HepG2 (cell line): ENCODE measurements at regions of chr2 and their contacts with region 1.

Region 1: DNA sequence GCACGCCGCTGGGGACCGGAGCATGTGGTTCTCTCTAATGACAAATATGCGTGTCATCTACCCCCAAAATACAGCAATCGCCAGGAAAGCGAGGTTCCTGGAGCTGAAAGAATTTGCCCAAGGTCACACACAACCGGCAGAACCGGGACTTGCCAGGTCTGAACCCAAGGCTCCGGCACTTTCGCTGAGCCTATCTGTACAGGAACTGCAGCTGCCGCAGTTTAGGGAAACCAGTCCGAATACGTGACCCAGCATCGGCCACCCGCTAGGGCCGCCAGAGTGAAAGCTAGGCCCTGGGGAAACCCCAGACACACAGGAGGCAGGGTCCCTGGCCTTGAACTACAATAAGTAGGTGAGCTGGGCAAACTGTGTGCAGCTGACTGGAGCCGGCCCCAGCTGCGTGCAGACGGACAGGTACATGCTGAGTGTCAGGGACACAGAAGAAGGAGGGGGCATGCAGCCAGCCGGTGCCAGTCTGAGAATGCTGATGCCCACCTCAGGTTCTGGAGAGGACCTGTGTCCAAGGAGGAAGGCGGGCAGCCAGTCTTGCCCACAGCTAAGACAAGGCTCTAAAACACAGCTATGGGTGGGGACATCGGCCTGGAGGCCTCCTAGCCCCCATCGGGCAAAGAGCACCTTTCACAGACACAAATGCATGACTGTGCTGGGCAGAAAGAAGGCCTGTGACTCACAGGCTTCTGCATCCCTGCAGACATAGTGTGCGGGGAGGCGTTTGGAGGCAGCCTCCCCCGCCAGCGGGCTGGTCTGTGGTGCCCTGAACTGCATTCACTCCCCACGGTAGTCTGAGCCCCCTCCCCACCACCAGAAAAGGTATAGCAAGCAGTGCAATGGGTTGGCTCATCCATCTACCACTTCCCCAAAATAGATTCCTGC is 107.5 kb upstream of the ID2 start:
- DNase-seq: peak; percentile 90
- ATAC-seq: peak; percentile 81
- H3K4me3 ChIP-seq: peak overlapping the region; percentile 51 to 71 (median 55)
- H3K27ac ChIP-seq: peak overlapping the region; percentile 82
- H3K4me1 ChIP-seq: peaks cover 75% of the 10 kb centered on the region
- H3K27me3 ChIP-seq: no peaks in the 10 kb centered on the region; a peak in 2 of 5 replicates
- CTCF ChIP-seq: peak; percentile 25
- EP300 ChIP-seq: peak; percentile 69 to 85; a peak in 3 of 4 replicates
- POLR2A ChIP-seq: peak in 1 of 2 experiments; percentile 54; a peak in 3 of 4 replicates
- RAD21 ChIP-seq: peak; percentile 40

Region 2: DNA sequence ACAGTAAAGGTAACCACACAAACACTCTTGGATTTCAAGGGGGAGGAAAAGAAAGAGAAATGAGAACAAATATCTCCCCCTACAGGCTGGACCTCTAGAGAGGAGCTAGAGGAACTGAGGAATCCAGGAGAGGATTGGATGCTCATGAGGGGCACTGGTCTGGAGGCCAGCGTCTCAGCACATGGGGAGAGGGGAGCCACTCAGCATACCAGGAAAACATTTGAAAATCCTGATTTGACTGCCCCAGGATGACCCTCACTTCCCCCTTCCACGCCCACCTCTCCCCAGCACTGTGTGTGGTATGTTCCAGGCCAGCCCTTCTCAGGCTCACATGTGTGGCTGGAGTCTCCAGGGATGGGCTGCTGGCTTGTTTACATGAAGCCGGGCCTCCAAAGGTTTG is 289.3 kb before region 1 on chr2:
- CTCF ChIA-PET with region 1: no interaction called
- POLR2A ChIA-PET with region 1: no interaction called
- in situ Hi-C with region 1: no loop called
- intact Hi-C with region 1: no loop called
- DNase-seq: peak; percentile 20
- ATAC-seq: peak; percentile 64
- H3K4me3 ChIP-seq: no peak overlapping the region
- H3K27ac ChIP-seq: no peak overlapping the region
- H3K4me1 ChIP-seq: peaks cover 9% of the 10 kb centered on the region
- H3K27me3 ChIP-seq: peaks cover 0 to 2% of the 10 kb centered on the region in 2 experiments; a peak in 1 of 5 replicates
- CTCF ChIP-seq: peak; percentile 44
- EP300 ChIP-seq: no peak
- POLR2A ChIP-seq: no peak
- RAD21 ChIP-seq: no peak

Region 3: GRCh38 chr2:8312861-8313830 is 261.2 kb before region 1 on chr2:
- CTCF ChIA-PET with region 1: no interaction called
- POLR2A ChIA-PET with region 1: no interaction called
- in situ Hi-C with region 1: no loop called
- intact Hi-C with region 1: no loop called
- DNase-seq: no peak
- ATAC-seq: no peak
- H3K4me3 ChIP-seq: no peak overlapping the region
- H3K27ac ChIP-seq: no peak overlapping the region
- H3K4me1 ChIP-seq: peaks cover 12% of the 10 kb centered on the region
- H3K27me3 ChIP-seq: peaks cover 2 to 18% of the 10 kb centered on the region in 2 experiments; a peak in 3 of 5 replicates
- CTCF ChIP-seq: no peak
- EP300 ChIP-seq: no peak
- POLR2A ChIP-seq: no peak
- RAD21 ChIP-seq: no peak

Region 4: DNA sequence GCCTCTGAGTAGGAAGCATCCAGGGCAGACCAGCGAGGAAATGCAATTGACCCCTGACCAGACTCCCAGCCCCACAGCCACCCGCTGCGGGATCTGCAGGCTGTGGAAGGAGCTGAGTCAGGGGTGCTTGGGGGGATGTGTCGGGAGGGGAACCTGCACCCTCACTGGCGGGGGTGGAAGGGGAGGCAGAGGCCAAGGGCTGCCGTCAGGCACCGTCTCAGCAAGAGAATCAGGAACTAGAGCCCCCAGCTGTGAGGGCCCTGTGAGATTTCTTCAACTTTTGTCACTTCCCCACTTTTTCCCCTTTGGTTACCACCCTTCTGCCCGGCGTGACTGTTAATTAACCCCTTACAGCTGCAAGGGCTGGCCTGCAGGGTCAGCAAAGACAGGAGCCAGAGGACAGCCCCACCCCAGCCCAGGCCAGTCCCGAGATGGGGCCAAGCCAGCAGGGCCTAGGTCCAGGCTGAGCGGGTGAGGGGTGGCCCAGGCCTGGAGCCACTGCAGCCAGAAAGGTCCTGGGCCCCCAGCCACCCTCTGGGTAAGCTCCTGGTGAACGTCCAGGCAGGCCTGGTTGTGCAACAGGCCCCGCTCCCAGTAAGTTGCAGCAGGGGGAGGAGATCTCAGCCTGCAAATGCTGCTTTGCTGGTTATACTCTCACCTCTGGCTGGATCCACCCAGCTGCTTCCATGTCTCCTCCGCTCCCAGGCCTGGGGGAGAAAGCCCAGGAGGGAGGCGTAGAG is 39.5 kb before region 1 on chr2:
- CTCF ChIA-PET with region 1: no interaction called
- POLR2A ChIA-PET with region 1: interaction called, 4 read pairs
- in situ Hi-C with region 1: no loop called
- intact Hi-C with region 1: loop called (anchors 2 kb)
- DNase-seq: peak; percentile 48
- ATAC-seq: peak; percentile 85
- H3K4me3 ChIP-seq: peak overlapping the region in 2 of 3 experiments; percentile 4 to 56; a peak in 2 of 6 replicates
- H3K27ac ChIP-seq: no peak overlapping the region
- H3K4me1 ChIP-seq: peaks cover 42% of the 10 kb centered on the region
- H3K27me3 ChIP-seq: peaks cover 6 to 34% of the 10 kb centered on the region in 2 experiments
- CTCF ChIP-seq: 0 out of 2 replicates have a peak, but pooled peaks have one; percentile 26
- EP300 ChIP-seq: no peak
- POLR2A ChIP-seq: no peak
- RAD21 ChIP-seq: peak; percentile 25; the same call in 1 of the 2 replicates

Region 5: GRCh38 chr2:8606226-8606625 is 31.8 kb after region 1 on chr2:
- CTCF ChIA-PET with region 1: no interaction called
- POLR2A ChIA-PET with region 1: interaction called, 47 read pairs
- in situ Hi-C with region 1: no loop called
- intact Hi-C with region 1: loop called (anchors 5 kb)
- DNase-seq: no peak
- ATAC-seq: no peak
- H3K4me3 ChIP-seq: no peak overlapping the region
- H3K27ac ChIP-seq: no peak overlapping the region
- H3K4me1 ChIP-seq: peaks cover 66% of the 10 kb centered on the region
- H3K27me3 ChIP-seq: no peaks in the 10 kb centered on the region
- CTCF ChIP-seq: no peak
- EP300 ChIP-seq: no peak
- POLR2A ChIP-seq: no peak
- RAD21 ChIP-seq: no peak

Region 6: DNA sequence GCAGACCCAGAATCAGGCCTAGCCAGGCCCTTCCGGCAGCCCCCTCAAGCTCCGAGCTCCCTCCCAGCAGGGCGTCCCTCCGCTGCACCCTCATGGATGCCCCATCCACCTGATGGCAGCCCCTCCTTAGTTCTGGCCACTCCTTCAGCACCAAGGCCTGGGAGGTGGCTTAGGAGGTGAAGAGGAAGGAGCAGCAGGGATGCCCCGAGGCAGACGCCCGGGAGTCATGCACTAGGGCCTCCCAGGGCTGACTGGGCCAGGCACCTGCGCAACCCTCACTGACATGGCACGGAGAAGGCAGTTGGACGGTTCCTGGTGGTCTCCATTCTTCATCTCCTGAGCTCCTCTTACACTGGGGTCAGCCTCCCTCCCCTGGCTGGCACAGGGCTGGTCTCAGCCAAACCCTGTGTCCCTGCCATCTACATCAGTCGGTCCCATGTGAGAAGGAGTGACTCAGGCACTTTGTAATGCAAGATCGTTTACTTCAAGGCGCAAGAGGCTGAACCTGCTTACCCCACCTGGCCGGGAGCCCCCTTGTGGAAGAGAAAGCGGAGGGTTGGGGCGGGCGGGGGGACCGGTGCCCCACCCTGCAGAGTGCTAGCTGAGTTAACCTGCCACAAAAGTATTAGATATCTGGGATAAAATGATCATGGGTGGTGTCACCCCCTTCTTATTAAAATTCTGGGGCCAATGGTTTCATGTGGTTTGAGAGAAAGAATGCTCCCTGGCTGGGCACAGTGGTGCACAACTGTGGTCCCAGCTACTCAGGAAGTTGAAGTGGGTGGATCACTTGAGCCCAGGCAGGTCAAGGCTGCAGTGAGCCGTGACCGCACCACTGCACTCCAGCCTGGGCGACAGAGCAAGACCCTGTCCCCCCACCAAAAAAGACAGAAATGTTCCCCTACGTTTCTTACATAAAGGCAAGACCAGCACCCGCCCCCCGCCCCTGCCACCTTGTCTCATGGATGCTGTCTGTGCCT is 54.1 kb after region 1 on chr2:
- CTCF ChIA-PET with region 1: no interaction called
- POLR2A ChIA-PET with region 1: interaction called, 70 read pairs
- in situ Hi-C with region 1: no loop called
- intact Hi-C with region 1: loop called (anchors 1 kb)
- DNase-seq: no peak
- ATAC-seq: no peak
- H3K4me3 ChIP-seq: peak overlapping the region in 1 of 3 experiments; percentile 80; a peak in 1 of 6 replicates
- H3K27ac ChIP-seq: peak overlapping the region; percentile 84
- H3K4me1 ChIP-seq: peaks cover 100% of the 10 kb centered on the region
- H3K27me3 ChIP-seq: no peaks in the 10 kb centered on the region; a peak in 1 of 5 replicates
- CTCF ChIP-seq: no peak
- EP300 ChIP-seq: no peak
- POLR2A ChIP-seq: no peak
- RAD21 ChIP-seq: no peak